ENCODE measurements at regions of chr6 and their contacts with region 1.

Region 1: GRCh38 chr6:135002229-135002844 is 52.3 kb downstream of the HBS1L start:
- DNase-seq: no peak
- ATAC-seq: peak; percentile 64
- H3K4me3 ChIP-seq: no peak overlapping the region; the same call in 1 of the 2 replicates
- H3K27ac ChIP-seq: peak overlapping the region; percentile 88
- H3K4me1 ChIP-seq: peaks cover 11% of the 10 kb centered on the region
- H3K27me3 ChIP-seq: no peaks in the 10 kb centered on the region
- CTCF ChIP-seq: peak; percentile 42 to 45 (median 44); a peak in 4 of 6 replicates
- EP300 ChIP-seq: no peak
- POLR2A ChIP-seq: no peak
- RAD21 ChIP-seq: peak; percentile 65

Region 2: GRCh38 chr6:133952815-133953633 is 1049.3 kb before region 1 on chr6 and contains the start of gene TBPL1:
- CTCF ChIA-PET with region 1: no interaction called
- POLR2A ChIA-PET with region 1: no interaction called
- RAD21 ChIA-PET with region 1: no interaction called
- SMC1A ChIA-PET with region 1: no interaction called
- in situ Hi-C with region 1: no loop called
- intact Hi-C with region 1: loop called (anchors 10 kb)
- DNase-seq: peak; percentile 90
- ATAC-seq: peak; percentile 88
- H3K4me3 ChIP-seq: peak within 1 kb of the TSS; percentile 88
- H3K27ac ChIP-seq: peak within 1 kb of the TSS; percentile 74
- H3K4me1 ChIP-seq: peaks cover 11% of the 10 kb centered on the region
- H3K27me3 ChIP-seq: no peaks in the 10 kb centered on the region
- CTCF ChIP-seq: no peak
- EP300 ChIP-seq: peak in 1 of 2 experiments; percentile 62; a peak in 1 of 4 replicates
- POLR2A ChIP-seq: peak; percentile 94
- RAD21 ChIP-seq: no peak
- polyA plus RNA-seq, gene TBPL1: 34.9 to 52.5 TPM

Region 3: GRCh38 chr6:134373282-134373922 is 628.9 kb before region 1 on chr6:
- CTCF ChIA-PET with region 1: no interaction called
- POLR2A ChIA-PET with region 1: no interaction called
- RAD21 ChIA-PET with region 1: no interaction called
- SMC1A ChIA-PET with region 1: no interaction called
- in situ Hi-C with region 1: no loop called
- intact Hi-C with region 1: no loop called
- DNase-seq: peak; percentile 85
- ATAC-seq: peak; percentile 97
- H3K4me3 ChIP-seq: peak overlapping the region; percentile 15; the same call in 1 of the 2 replicates
- H3K27ac ChIP-seq: peak overlapping the region; percentile 70
- H3K4me1 ChIP-seq: peaks cover 22% of the 10 kb centered on the region
- H3K27me3 ChIP-seq: no peaks in the 10 kb centered on the region
- CTCF ChIP-seq: no peak
- EP300 ChIP-seq: peak; percentile 61 to 82; a peak in 2 of 4 replicates
- POLR2A ChIP-seq: no peak
- RAD21 ChIP-seq: peak; percentile 17; the same call in 1 of the 2 replicates

Region 4: GRCh38 chr6:135021310-135022049 is 19.1 kb after region 1 on chr6:
- CTCF ChIA-PET with region 1: interaction called, 17 read pairs
- POLR2A ChIA-PET with region 1: interaction called, 18 read pairs
- RAD21 ChIA-PET with region 1: interaction called, 41 read pairs
- SMC1A ChIA-PET with region 1: interaction called, 45 read pairs
- in situ Hi-C with region 1: no loop called
- intact Hi-C with region 1: no loop called
- DNase-seq: no peak
- ATAC-seq: peak; percentile 91
- H3K4me3 ChIP-seq: 0 out of 2 replicates have a peak overlapping the region, but pooled peaks have one; percentile 13
- H3K27ac ChIP-seq: peak overlapping the region; percentile 54; the same call in 1 of the 2 replicates
- H3K4me1 ChIP-seq: peaks cover 12% of the 10 kb centered on the region; the same call in 1 of the 2 replicates
- H3K27me3 ChIP-seq: no peaks in the 10 kb centered on the region
- CTCF ChIP-seq: no peak
- EP300 ChIP-seq: peak in 1 of 2 experiments; percentile 26; a peak in 1 of 4 replicates
- POLR2A ChIP-seq: no peak
- RAD21 ChIP-seq: no peak

Region 5: GRCh38 chr6:135044639-135045038 is 42.3 kb after region 1 on chr6:
- CTCF ChIA-PET with region 1: interaction called, 5 read pairs
- POLR2A ChIA-PET with region 1: interaction called, 5 read pairs
- RAD21 ChIA-PET with region 1: interaction called, 13 read pairs
- SMC1A ChIA-PET with region 1: interaction called, 15 read pairs
- in situ Hi-C with region 1: no loop called
- intact Hi-C with region 1: no loop called
- DNase-seq: no peak
- ATAC-seq: peak; percentile 20
- H3K4me3 ChIP-seq: peak overlapping the region; percentile 6; the same call in 1 of the 2 replicates
- H3K27ac ChIP-seq: 0 out of 2 replicates have a peak overlapping the region, but pooled peaks have one; percentile 13
- H3K4me1 ChIP-seq: peaks cover 9% of the 10 kb centered on the region
- H3K27me3 ChIP-seq: no peaks in the 10 kb centered on the region
- CTCF ChIP-seq: no peak
- EP300 ChIP-seq: no peak
- POLR2A ChIP-seq: no peak
- RAD21 ChIP-seq: no peak

Region 6: DNA sequence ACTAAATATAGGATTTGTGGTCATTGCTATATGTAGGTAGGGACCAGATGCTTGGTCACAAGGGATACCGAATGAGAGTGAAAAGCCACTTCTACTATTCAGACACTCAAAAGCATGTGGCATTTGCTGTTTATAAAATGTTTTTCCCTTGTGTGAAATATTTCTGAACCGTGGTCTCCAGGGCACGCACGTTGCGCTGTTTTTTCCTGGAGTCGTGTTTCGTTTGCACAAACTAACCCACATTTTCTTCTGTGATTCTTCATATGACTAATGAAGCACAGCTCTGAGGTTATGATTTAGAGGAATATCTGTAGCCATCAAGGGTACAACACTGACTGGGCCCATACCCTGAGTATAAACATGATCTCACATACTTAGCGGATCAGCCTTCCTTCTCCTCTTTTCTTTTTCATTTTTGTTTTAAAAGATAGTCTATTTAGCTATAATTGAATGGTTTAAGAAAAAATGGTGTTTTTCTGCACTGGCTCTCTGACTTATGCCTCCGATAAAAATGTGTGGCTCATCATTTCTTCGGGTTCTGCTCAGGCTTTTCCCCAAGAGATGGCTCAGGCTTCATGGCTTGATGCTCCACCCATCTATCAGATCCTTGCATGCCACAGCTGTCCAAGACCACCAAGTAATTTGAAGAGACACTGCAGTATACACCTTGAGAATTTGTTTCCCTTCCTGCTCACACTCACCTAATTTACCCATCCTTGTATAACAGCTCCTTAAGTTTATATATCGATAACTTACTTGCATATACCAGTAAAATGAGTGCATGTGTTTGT is 112.2 kb after region 1 on chr6:
- CTCF ChIA-PET with region 1: interaction called, 3 read pairs
- POLR2A ChIA-PET with region 1: no interaction called
- RAD21 ChIA-PET with region 1: interaction called, 5 read pairs
- SMC1A ChIA-PET with region 1: interaction called, 10 read pairs
- in situ Hi-C with region 1: no loop called
- intact Hi-C with region 1: loop called (anchors 10 kb)
- DNase-seq: peak; percentile 67
- ATAC-seq: peak; percentile 90
- H3K4me3 ChIP-seq: no peak overlapping the region; the same call in 1 of the 2 replicates
- H3K27ac ChIP-seq: peak overlapping the region; percentile 56
- H3K4me1 ChIP-seq: peaks cover 42% of the 10 kb centered on the region
- H3K27me3 ChIP-seq: no peaks in the 10 kb centered on the region
- CTCF ChIP-seq: no peak
- EP300 ChIP-seq: peak; percentile 97 to 98
- POLR2A ChIP-seq: no peak
- RAD21 ChIP-seq: no peak

Region 7: GRCh38 chr6:135438907-135439535 is 436.7 kb after region 1 on chr6:
- CTCF ChIA-PET with region 1: interaction called, 3 read pairs
- POLR2A ChIA-PET with region 1: no interaction called
- RAD21 ChIA-PET with region 1: interaction called, 3 read pairs
- SMC1A ChIA-PET with region 1: no interaction called
- in situ Hi-C with region 1: loop called (anchors 25 kb)
- intact Hi-C with region 1: loop called (anchors 10 kb)
- DNase-seq: peak; percentile 17
- ATAC-seq: peak; percentile 83
- H3K4me3 ChIP-seq: no peak overlapping the region
- H3K27ac ChIP-seq: no peak overlapping the region
- H3K4me1 ChIP-seq: peaks cover 11% of the 10 kb centered on the region
- H3K27me3 ChIP-seq: no peaks in the 10 kb centered on the region
- CTCF ChIP-seq: peak; percentile 55 to 66 (median 58)
- EP300 ChIP-seq: no peak
- POLR2A ChIP-seq: no peak
- RAD21 ChIP-seq: peak; percentile 74